ENCODE measurements at regions of chr11 and their contacts with region 1.

Region 1: DNA sequence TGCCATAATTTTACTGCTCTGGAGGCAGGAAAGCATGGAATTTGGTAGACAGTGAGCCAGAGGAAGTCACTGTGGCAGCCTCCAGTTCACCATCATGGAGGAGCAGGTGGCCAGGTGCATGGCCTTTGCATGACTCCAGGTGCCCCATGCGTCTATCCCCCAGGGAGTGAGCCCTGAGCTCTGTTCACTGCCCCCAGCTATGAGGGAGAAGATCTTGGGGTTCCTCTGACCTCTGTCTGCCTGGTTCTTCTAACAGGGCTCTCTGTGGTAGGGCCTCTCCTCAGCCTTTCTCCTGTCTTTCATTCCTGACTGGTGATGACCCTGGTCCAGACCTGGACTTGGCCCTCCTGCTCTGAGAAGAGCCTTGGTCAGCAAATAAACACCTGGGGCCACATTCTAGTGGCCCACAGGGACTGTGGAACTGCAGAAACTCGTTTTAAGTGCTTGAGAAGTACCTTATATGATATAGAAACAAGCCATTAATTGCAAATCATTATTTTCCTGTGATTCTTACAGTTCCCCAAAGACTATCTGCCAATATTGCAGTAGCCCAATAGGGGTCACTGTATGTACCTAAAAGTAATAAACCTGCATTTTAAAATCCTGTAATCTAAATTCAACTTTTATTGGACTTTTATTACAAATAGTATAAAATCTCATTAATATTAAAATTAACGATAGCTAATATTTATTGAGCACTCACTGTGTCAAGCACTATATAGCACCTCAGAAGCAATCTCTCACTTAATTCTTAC is 120.0 kb upstream of the SYT13 start:
- DNase-seq: no peak
- ATAC-seq: no peak
- H3K4me3 ChIP-seq: no peak overlapping the region
- H3K27ac ChIP-seq: no peak overlapping the region
- H3K4me1 ChIP-seq: no peaks in the 10 kb centered on the region
- H3K27me3 ChIP-seq: peaks cover 0 to 48% (median 17%) of the 10 kb centered on the region in 7 donors
- CTCF ChIP-seq: peak; percentile 10 to 69 (median 52)

Region 2: DNA sequence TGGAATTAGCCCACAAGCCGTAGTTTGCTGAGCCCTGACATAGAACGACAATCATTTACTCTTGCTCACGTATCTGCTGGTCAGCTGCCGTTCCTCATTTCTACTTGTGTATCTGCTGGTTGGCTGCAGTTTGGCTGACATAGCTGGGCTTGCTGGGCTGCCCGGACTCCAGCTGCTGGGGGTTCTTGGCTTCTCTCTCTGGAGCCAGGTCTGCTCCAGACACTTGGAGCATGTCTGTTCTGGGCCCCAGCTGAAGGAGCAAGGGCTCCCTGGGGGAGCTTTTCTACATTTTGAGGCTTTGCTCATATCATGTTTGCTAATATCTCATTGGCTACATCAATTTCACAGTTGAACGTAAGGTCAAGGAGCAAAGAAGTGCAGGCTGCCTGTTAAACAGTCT is 212.4 kb before region 1 on chr11:
- intact Hi-C with region 1: no loop called
- DNase-seq: peak in 1 of 2 donors; percentile 41
- ATAC-seq: peak; percentile 50 to 87 (median 78)
- H3K4me3 ChIP-seq: no peak overlapping the region
- H3K27ac ChIP-seq: peak overlapping the region in 3 of 10 donors; percentile 16 to 34 (median 30)
- H3K4me1 ChIP-seq: peaks cover 0 to 12% (median 6%) of the 10 kb centered on the region in 9 donors
- H3K27me3 ChIP-seq: no peaks in the 10 kb centered on the region
- CTCF ChIP-seq: no peak

Region 3: GRCh38 chr11:45485070-45485707 is 79.1 kb after region 1 on chr11:
- intact Hi-C with region 1: no loop called
- DNase-seq: no peak
- ATAC-seq: no peak
- H3K4me3 ChIP-seq: no peak overlapping the region
- H3K27ac ChIP-seq: no peak overlapping the region
- H3K4me1 ChIP-seq: no peaks in the 10 kb centered on the region
- H3K27me3 ChIP-seq: peaks cover 0 to 48% (median 41%) of the 10 kb centered on the region in 7 donors
- CTCF ChIP-seq: no peak

Region 4: DNA sequence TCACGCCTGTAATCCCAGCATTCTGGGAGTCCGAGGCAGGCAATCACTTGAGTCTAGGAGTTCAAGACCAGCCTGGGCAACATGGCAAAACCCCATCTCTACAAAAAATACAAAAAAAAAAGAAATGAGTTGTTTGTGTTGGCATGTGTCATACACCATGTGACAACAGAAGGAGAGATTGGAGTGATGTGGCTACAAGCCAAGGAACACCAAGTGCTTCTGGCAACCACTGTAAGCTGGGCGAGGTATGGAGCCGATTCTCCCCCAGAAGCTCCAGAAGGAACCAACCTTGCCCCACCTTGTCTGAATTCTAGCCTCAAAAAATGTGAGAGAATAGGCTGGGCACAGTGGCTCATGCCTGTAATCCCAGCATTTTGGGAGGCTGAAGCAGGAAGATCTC is 359.7 kb after region 1 on chr11:
- intact Hi-C with region 1: loop called in 3 of 10 experiments (anchors 2 to 10 kb)
- DNase-seq: no peak
- ATAC-seq: no peak
- H3K4me3 ChIP-seq: no peak overlapping the region
- H3K27ac ChIP-seq: no peak overlapping the region
- H3K4me1 ChIP-seq: peaks cover 0 to 4% (median 0%) of the 10 kb centered on the region in 9 donors
- H3K27me3 ChIP-seq: no peaks in the 10 kb centered on the region
- CTCF ChIP-seq: no peak